ENCODE measurements at regions of chr15 and their contacts with region 1.

Region 1: DNA sequence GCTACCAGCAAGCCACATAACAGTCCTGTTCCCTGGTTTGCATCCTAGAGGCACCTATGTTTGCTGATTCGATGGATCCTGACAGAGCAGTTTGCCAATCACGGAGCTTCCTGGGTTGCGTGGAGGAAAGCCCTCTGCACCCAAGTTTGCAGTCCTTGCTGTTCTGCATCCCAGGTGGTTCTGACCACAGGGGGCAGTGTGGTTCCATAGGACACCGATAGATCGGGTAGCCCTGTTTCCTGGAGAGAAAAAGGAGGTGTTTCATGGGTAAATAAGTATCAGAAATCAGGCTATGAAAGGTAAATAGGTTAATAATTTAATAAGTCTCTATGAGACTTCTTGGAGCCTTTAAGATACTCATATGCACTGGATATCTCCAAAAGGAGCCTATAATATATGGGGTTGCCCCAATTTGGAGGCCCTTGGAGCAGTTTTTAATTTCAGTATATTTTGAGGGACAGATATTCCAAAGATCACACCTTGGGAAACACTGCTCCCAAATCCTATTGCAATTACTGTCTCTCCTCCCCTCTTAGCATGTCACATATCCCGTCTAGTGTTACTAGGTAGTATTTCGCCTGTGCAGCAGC is 194.6 kb upstream of the TPM1 start:
- DNase-seq: peak; percentile 76 to 82
- H3K4me3 ChIP-seq: no peak overlapping the region
- H3K27ac ChIP-seq: peak overlapping the region; percentile 36 to 69
- H3K4me1 ChIP-seq: peaks cover 0 to 6% of the 10 kb centered on the region in 2 donors
- H3K27me3 ChIP-seq: no peaks in the 10 kb centered on the region
- CTCF ChIP-seq: peak; percentile 60 to 83 (median 66)
- POLR2A ChIP-seq: no peak

Region 2: GRCh38 chr15:63041974-63042819 is 194.2 kb after region 1 on chr15 and contains the start of gene TPM1:
- intact Hi-C with region 1: loop called (anchors 2 kb)
- DNase-seq: peak; percentile 92 to 93
- H3K4me3 ChIP-seq: peak within 1 kb of the TSS; percentile 77 to 89
- H3K27ac ChIP-seq: peak within 1 kb of the TSS; percentile 97 to 98
- H3K4me1 ChIP-seq: no peaks in the 10 kb centered on the region
- H3K27me3 ChIP-seq: no peaks in the 10 kb centered on the region
- CTCF ChIP-seq: peak in 2 of 4 experiments; percentile 2 to 18
- POLR2A ChIP-seq: peak; percentile 82 to 93
- total RNA-seq, gene TPM1: 622 to 1,998 (median 1,003) TPM